Vagina (tissue), 2 donors: ENCODE measurements at regions of chr15 and their contacts with region 1.

Region 1: DNA sequence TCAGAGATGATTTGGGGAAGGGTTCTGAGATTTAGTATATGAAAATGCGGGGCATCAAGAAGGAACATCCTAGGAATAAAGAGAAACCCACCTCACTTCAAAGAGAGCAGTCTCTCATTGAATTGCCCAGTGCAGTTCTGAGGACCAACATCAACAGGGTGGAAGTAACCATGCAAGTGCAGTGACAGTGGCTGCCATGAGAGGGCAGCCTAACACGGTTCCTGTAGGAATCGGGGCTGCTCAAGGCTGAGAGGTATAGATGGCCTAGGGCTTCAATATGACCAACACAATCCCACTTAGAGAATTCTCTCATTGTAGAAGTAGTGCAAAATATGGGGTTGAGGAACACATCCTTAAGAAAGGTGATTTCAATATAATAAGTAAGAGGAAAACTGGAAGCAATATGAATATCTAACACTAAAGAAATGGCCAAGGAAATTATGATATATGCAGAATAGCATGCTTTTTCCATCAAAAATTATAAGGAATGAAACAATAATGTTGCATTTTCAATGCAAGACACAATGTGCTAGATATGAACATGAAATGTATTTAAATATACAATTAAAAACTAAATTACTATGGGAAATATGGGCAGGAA is 51.1 kb upstream of the ARRDC4 start:
- DNase-seq: no peak
- H3K4me3 ChIP-seq: no peak overlapping the region
- H3K27ac ChIP-seq: no peak overlapping the region
- H3K4me1 ChIP-seq: peaks cover 3% of the 10 kb centered on the region
- H3K27me3 ChIP-seq: no peaks in the 10 kb centered on the region
- CTCF ChIP-seq: peak; percentile 22 to 77 (median 55)
- POLR2A ChIP-seq: no peak

Region 2: DNA sequence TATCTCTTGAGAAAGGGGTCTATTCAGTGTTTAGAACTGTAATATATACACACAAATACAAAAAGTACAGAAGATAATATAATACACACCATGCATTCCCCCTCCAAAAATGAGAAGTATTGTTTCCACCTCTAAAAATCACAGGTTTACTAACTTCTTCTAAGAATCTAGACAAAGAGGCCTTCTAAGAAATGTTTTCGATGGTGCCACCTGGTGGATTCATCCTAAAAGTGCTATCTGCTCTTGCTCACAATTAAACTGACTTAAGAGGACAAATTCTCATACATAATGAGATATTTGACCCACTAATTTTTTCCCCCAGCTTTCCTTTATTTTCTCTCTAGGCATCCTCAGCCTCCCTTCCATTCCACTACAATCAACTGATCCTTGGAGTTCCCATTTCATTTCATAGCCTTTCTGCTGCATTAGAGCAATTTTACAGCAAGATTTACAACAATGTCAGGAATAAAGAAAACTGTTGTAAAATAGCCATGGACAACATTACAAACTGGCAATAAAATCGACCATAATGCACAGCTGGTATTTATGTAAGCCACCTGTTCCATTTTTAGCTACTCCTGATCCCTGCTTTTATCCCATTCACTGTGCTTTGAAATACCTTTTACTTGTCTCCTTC is 175.7 kb after region 1 on chr15:
- intact Hi-C with region 1: loop called (anchors 2 kb)
- DNase-seq: no peak
- H3K4me3 ChIP-seq: no peak overlapping the region
- H3K27ac ChIP-seq: no peak overlapping the region
- H3K4me1 ChIP-seq: no peaks in the 10 kb centered on the region
- H3K27me3 ChIP-seq: no peaks in the 10 kb centered on the region
- CTCF ChIP-seq: peak; percentile 55 to 75 (median 59)
- POLR2A ChIP-seq: no peak

Region 3: GRCh38 chr15:98177924-98178592 is 268.7 kb after region 1 on chr15:
- intact Hi-C with region 1: loop called (anchors 5 kb)
- DNase-seq: no peak
- H3K4me3 ChIP-seq: no peak overlapping the region
- H3K27ac ChIP-seq: no peak overlapping the region
- H3K4me1 ChIP-seq: no peaks in the 10 kb centered on the region
- H3K27me3 ChIP-seq: no peaks in the 10 kb centered on the region
- CTCF ChIP-seq: peak; percentile 42 to 80 (median 64)
- POLR2A ChIP-seq: no peak

Region 4: DNA sequence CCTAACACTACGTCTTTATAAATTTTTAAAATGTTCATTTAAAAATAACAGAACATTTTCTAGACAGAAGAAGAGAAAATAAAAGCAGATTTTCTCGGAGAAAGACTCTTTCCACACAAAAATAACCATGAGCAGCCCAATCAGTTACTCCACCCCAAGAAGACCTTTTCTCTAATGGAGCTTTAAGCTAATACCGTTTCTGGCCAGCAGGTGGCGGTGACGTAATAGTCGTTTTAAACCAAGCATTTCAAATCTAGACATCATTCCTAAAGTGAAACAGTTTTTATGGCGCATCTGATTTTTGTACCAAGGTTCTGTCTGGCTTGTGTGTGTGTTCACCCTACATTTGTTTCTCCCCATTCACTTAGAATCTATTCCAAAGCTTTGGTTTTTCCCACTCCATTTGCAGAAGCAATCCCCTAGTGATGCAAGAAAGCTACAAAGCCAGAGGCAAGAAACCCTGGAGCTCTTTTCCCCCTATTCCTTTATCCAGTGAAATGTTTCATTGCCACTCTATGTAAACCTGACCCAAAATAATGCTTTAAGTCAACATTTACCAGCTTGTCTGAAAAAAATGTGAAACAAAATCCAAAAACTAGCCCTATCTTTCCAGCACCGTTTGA is 402.3 kb after region 1 on chr15:
- intact Hi-C with region 1: no loop called
- DNase-seq: peak; percentile 22 to 87
- H3K4me3 ChIP-seq: no peak overlapping the region
- H3K27ac ChIP-seq: no peak overlapping the region
- H3K4me1 ChIP-seq: no peaks in the 10 kb centered on the region
- H3K27me3 ChIP-seq: no peaks in the 10 kb centered on the region
- CTCF ChIP-seq: peak; percentile 76 to 90 (median 80)
- POLR2A ChIP-seq: no peak